IMR-90 (cell line): ENCODE measurements at regions of chr9 and their contacts with region 1.

Region 1: DNA sequence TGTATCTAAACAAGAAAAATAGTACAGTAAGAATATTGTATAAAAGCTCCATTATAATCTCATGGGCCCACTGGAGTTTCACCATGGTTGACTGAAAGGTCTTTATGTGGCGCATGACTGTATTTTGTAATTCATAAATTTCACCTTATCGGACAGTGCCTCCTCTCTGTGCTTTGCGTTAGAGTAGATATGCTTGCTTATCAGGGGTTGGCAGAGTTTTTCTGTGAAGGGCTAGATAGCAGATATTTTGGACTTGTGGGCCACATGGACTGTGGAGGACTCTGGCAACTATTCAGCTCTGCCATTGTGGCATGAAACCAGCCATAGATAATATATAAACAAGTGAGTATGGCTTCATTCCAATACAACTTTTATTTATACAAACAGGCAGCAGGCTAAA is 23.2 kb downstream of the GAPVD1 start:
- DNase-seq: no peak
- ATAC-seq: no peak
- H3K4me3 ChIP-seq: no peak overlapping the region
- H3K27ac ChIP-seq: no peak overlapping the region
- H3K4me1 ChIP-seq: peaks cover 2% of the 10 kb centered on the region; the same call in 1 of the 2 replicates
- H3K27me3 ChIP-seq: no peaks in the 10 kb centered on the region
- CTCF ChIP-seq: no peak
- POLR2A ChIP-seq: no peak
- RAD21 ChIP-seq: no peak

Region 2: GRCh38 chr9:125255781-125256391 is 29.0 kb before region 1 on chr9:
- CTCF ChIA-PET with region 1: interaction called, 4 read pairs
- POLR2A ChIA-PET with region 1: interaction called, 22 read pairs
- dilution Hi-C with region 1: no loop called
- in situ Hi-C with region 1: no loop called
- intact Hi-C with region 1: no loop called
- DNase-seq: no peak
- ATAC-seq: peak; percentile 59; the same call in 1 of the 2 replicates
- H3K4me3 ChIP-seq: no peak overlapping the region
- H3K27ac ChIP-seq: no peak overlapping the region
- H3K4me1 ChIP-seq: no peaks in the 10 kb centered on the region
- H3K27me3 ChIP-seq: no peaks in the 10 kb centered on the region
- CTCF ChIP-seq: peak; percentile 48
- POLR2A ChIP-seq: no peak
- RAD21 ChIP-seq: peak; percentile 60